K562 (cell line): ENCODE measurements at regions of chr16 and their contacts with region 1.

Region 1: GRCh38 chr16:68843482-68844210 is at the start of gene TANGO6:
- DNase-seq: peak; percentile 85 to 89 (median 86)
- ATAC-seq: peak; percentile 98
- H3K4me3 ChIP-seq: peak within 1 kb of the TSS; percentile 93
- H3K27ac ChIP-seq: peak within 1 kb of the TSS; percentile 88
- H3K4me1 ChIP-seq: peaks cover 3 to 5% of the 10 kb centered on the region in 2 experiments; a peak in 2 of 5 replicates
- H3K27me3 ChIP-seq: no peaks in the 10 kb centered on the region
- CTCF ChIP-seq: peak; percentile 60 to 71 (median 60)
- EP300 ChIP-seq: no peak
- POLR2A ChIP-seq: peak; percentile 92
- RAD21 ChIP-seq: peak in 1 of 2 experiments; percentile 46; a peak in 3 of 4 replicates
- polyA plus RNA-seq, gene TANGO6: 1.6 to 1.7 TPM

Region 2: DNA sequence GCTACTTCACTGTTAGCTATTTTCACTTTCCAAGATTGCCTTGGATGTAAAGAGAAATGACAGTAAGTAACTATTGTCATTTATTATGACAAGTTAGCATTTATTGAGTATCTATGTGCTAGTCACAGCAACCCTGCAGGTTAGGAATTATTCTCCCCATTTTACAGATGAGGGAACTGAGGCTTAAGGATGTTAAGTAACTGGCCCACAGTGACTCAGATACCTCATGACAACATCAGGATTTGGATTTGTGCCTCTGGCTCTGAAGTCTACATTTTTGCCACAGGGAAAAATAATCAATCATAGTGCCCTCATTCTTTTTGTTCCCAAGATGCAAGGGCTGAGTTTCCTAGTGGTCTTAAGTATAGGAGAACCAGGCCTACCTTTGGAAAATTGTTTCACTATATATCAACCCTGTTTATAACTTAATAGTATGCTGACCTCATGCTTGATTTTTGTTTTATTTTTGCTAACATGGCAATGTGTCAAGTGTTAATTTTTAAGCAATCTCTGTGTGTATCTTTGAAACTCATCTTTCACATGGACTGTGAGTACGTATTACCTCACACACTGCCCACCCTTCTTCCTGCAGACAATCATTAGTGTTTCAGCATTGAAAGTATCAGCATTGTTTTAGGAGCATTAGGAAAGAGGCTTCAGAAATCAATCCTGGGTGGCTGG is 104.7 kb after region 1 on chr16:
- CTCF ChIA-PET with region 1: no interaction called
- POLR2A ChIA-PET with region 1: no interaction called
- in situ Hi-C with region 1: no loop called
- intact Hi-C with region 1: no loop called
- DNase-seq: no peak
- ATAC-seq: no peak
- H3K4me3 ChIP-seq: no peak overlapping the region
- H3K27ac ChIP-seq: no peak overlapping the region
- H3K4me1 ChIP-seq: no peaks in the 10 kb centered on the region
- H3K27me3 ChIP-seq: no peaks in the 10 kb centered on the region
- CTCF ChIP-seq: no peak
- EP300 ChIP-seq: no peak
- POLR2A ChIP-seq: no peak
- RAD21 ChIP-seq: no peak

Region 3: GRCh38 chr16:68985855-68986254 is 142.2 kb after region 1 on chr16:
- CTCF ChIA-PET with region 1: no interaction called
- POLR2A ChIA-PET with region 1: no interaction called
- in situ Hi-C with region 1: no loop called
- intact Hi-C with region 1: loop called (anchors 10 kb)
- DNase-seq: peak; percentile 37 to 57 (median 42)
- ATAC-seq: peak; percentile 34
- H3K4me3 ChIP-seq: no peak overlapping the region
- H3K27ac ChIP-seq: peak overlapping the region; percentile 74
- H3K4me1 ChIP-seq: peaks cover 16 to 42% of the 10 kb centered on the region in 2 experiments
- H3K27me3 ChIP-seq: no peaks in the 10 kb centered on the region
- CTCF ChIP-seq: no peak
- EP300 ChIP-seq: no peak
- POLR2A ChIP-seq: no peak
- RAD21 ChIP-seq: no peak

Region 4: DNA sequence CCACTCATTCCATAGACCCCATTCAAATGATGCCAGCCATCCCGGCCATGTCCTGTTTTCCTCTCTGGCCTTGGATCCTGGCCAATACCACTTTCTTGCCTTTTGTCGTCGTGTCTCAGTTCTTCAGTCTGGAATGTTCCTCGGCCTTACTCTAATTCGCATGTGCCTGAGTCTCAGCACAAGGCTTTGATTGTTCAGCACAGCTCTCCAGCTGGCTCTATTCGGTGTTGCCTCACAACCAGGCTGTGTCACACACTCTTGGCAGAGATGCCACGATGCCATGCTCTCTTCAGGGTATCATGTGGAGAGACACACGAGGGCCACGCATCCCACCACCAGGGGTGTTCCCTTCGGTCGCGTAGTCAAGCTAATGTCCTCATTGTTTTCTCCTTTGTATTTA is 465.7 kb after region 1 on chr16:
- CTCF ChIA-PET with region 1: no interaction called
- POLR2A ChIA-PET with region 1: no interaction called
- in situ Hi-C with region 1: no loop called
- intact Hi-C with region 1: loop called (anchors 10 kb)
- DNase-seq: no peak
- ATAC-seq: no peak
- H3K4me3 ChIP-seq: no peak overlapping the region
- H3K27ac ChIP-seq: no peak overlapping the region
- H3K4me1 ChIP-seq: peaks cover 5 to 13% of the 10 kb centered on the region in 2 experiments; a peak in 3 of 5 replicates
- H3K27me3 ChIP-seq: no peaks in the 10 kb centered on the region
- CTCF ChIP-seq: no peak
- EP300 ChIP-seq: no peak
- POLR2A ChIP-seq: no peak
- RAD21 ChIP-seq: no peak